Head of caudate nucleus (tissue), 42 donors: ENCODE measurements at regions of chr1 and their contacts with region 1.

Region 1: DNA sequence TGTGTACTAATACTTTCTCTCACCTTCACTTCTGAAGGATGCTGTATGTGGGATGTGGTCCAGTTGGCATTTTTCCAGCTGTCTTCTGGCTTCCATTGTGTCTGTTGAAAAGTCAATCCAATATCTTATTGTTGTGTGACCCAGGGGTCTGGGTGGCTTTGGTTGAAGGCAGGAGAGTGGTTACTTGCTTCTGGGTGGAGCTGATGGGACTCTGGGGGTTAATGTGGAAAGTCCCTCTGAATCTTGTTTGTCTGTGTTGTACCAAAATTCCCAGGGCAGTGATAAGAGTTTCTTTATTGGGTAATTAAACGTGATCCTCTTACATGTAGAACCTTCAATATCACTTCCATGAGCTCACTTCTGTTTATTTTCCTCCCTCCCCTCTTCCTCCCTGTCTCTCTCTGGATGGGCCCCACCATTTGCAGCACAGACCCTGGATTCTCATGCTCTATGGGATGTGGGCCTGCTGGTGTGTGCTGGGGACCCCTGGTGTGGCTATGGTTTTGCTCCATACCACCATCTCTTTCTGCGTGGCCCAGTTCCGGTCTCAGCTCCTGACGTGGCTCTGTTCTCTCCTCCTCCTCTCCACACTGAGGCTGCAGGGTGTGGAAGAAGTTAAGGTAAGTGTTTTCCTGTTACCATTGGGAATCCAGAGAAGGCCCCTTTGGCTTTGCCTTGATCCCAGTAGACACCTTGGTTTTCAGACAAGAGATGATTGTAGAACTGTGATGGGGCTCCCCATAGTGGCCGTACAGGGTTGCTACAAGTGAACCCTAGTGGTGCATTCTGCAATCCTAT is 71.5 kb downstream of the HHAT start:
- DNase-seq: peak; percentile 39 to 88 (median 76)

Region 2: DNA sequence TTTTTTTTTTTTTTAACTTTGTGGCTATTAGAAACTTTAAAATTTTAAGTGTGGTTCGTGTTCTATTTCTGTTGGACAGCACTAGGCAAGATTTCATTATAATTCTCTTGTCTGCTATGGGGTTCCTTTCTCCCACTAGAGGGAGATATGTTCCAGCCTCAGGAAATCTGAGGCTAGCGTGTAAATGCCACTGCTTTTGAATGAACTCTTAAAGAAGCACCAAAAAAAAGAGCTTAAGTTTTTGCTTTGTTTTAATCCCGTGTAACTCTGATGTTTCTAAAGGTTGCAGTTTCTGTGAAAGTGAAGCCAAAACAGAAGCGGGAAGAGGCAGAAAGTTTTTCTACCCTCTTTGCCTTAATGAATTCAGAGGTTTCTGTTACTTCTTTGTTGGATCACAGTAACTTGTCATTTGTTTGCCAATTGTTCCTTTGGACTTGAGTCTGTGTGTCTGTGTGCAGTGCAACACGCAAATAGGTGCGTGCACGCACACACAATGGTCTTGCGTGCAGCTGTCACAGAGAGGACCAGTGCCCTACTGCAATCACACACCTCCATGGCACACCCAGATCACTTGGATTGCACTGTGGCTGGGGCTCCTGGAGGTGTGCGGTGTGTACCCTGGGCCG is 39.3 kb before region 1 on chr1:
- intact Hi-C with region 1: loop called (anchors 2 kb)
- DNase-seq: peak in 14 of 42 donors; percentile 27 to 74 (median 49)

Region 3: GRCh38 chr1:210467440-210468043 is 67.3 kb after region 1 on chr1:
- intact Hi-C with region 1: no loop called
- DNase-seq: no peak